ENCODE measurements at regions of chr20 and their contacts with region 1.

Region 1: GRCh38 chr20:38434743-38435554 is at the start of gene SNHG17:
- DNase-seq: peak; percentile 95
- ATAC-seq: peak; percentile 92
- H3K4me3 ChIP-seq: peak within 1 kb of the TSS; percentile 56 to 96 (median 88)
- H3K4me3 Mint-ChIP-seq: peak within 1 kb of the TSS; percentile 99
- H3K27ac ChIP-seq: peak within 1 kb of the TSS; percentile 72 to 83
- H3K27ac Mint-ChIP-seq: peak within 1 kb of the TSS; percentile 98
- H3K4me1 ChIP-seq: peaks cover 11 to 13% of the 10 kb centered on the region in 2 donors
- H3K4me1 Mint-ChIP-seq: peaks cover 27% of the 10 kb centered on the region
- H3K27me3 ChIP-seq: peaks cover 0 to 3% (median 0%) of the 10 kb centered on the region in 4 experiments
- H3K27me3 Mint-ChIP-seq: peaks cover 12% of the 10 kb centered on the region
- CTCF ChIP-seq: peak; percentile 100
- total RNA-seq, gene SNHG17: 49.6 and 64.3 TPM in 2 replicates

Region 2: DNA sequence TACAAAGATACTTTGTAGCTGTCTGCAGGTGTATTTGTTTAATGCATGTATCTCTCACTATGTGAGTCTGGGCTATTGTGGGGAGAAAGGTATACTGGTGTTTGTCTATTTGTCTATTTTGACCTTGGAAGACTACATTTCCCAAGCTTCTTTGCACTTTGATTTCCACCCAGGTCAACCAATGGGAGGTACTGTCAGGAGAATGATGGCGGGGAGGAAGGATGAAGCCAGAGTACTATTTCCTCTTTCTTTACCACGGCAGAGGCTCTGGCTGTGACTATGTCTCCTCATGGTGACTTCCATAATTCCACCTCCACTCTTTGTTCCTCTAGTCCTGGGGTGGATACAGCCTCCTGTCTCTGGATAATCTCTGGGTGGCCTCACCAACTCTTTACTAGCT is 65.6 kb before region 1 on chr20:
- CTCF ChIA-PET with region 1: no interaction called
- POLR2A ChIA-PET with region 1: no interaction called
- intact Hi-C with region 1: no loop called
- DNase-seq: no peak
- ATAC-seq: no peak
- H3K4me3 ChIP-seq: no peak overlapping the region
- H3K4me3 Mint-ChIP-seq: no peak overlapping the region
- H3K27ac ChIP-seq: no peak overlapping the region
- H3K27ac Mint-ChIP-seq: no peak overlapping the region
- H3K4me1 ChIP-seq: peaks cover 4% of the 10 kb centered on the region in 2 donors
- H3K4me1 Mint-ChIP-seq: peaks cover 5% of the 10 kb centered on the region
- H3K27me3 ChIP-seq: peaks cover 0 to 3% (median 0%) of the 10 kb centered on the region in 4 experiments
- H3K27me3 Mint-ChIP-seq: peaks cover 22% of the 10 kb centered on the region
- CTCF ChIP-seq: no peak

Region 3: GRCh38 chr20:38446441-38447209 is 11.7 kb after region 1 on chr20:
- CTCF ChIA-PET with region 1: interaction called, 156 read pairs
- POLR2A ChIA-PET with region 1: interaction called, 36 read pairs
- intact Hi-C with region 1: loop called (anchors 1 kb)
- DNase-seq: peak; percentile 94
- ATAC-seq: peak; percentile 94
- H3K4me3 ChIP-seq: peak overlapping the region; percentile 47 to 92 (median 80)
- H3K4me3 Mint-ChIP-seq: peak overlapping the region; percentile 94
- H3K27ac ChIP-seq: peak overlapping the region; percentile 54 to 75
- H3K27ac Mint-ChIP-seq: peak overlapping the region; percentile 94
- H3K4me1 ChIP-seq: peaks cover 22 to 29% of the 10 kb centered on the region in 2 donors
- H3K4me1 Mint-ChIP-seq: peaks cover 21% of the 10 kb centered on the region
- H3K27me3 ChIP-seq: peaks cover 0 to 3% (median 0%) of the 10 kb centered on the region in 4 experiments
- H3K27me3 Mint-ChIP-seq: peaks cover 7% of the 10 kb centered on the region
- CTCF ChIP-seq: peak; percentile 94

Region 4: GRCh38 chr20:38472513-38473372 is 37.8 kb after region 1 on chr20 and contains the start of gene RALGAPB:
- CTCF ChIA-PET with region 1: interaction called, 37 read pairs
- POLR2A ChIA-PET with region 1: interaction called, 12 read pairs
- intact Hi-C with region 1: no loop called
- DNase-seq: peak; percentile 98
- ATAC-seq: peak; percentile 94
- H3K4me3 ChIP-seq: peak within 1 kb of the TSS; percentile 77 to 91 (median 84)
- H3K4me3 Mint-ChIP-seq: peak within 1 kb of the TSS; percentile 92
- H3K27ac ChIP-seq: peak within 1 kb of the TSS; percentile 52 to 84
- H3K27ac Mint-ChIP-seq: peak within 1 kb of the TSS; percentile 83
- H3K4me1 ChIP-seq: peaks cover 17 to 26% of the 10 kb centered on the region in 2 donors
- H3K4me1 Mint-ChIP-seq: peaks cover 45% of the 10 kb centered on the region
- H3K27me3 ChIP-seq: no peaks in the 10 kb centered on the region
- H3K27me3 Mint-ChIP-seq: no peaks in the 10 kb centered on the region
- CTCF ChIP-seq: no peak
- total RNA-seq, gene RALGAPB: 58.3 and 63.4 TPM in 2 replicates

Measured in B cell (primary cell).